HAP-1 (cell line): ENCODE measurements at regions of chr1 and their contacts with region 1.

Region 1: GRCh38 chr1:67861856-67862516 is 28.7 kb upstream of the GNG12 start:
- DNase-seq: no peak
- H3K4me3 ChIP-seq: no peak overlapping the region
- H3K4me1 ChIP-seq: no peaks in the 10 kb centered on the region
- H3K27me3 ChIP-seq: no peaks in the 10 kb centered on the region

Region 2: DNA sequence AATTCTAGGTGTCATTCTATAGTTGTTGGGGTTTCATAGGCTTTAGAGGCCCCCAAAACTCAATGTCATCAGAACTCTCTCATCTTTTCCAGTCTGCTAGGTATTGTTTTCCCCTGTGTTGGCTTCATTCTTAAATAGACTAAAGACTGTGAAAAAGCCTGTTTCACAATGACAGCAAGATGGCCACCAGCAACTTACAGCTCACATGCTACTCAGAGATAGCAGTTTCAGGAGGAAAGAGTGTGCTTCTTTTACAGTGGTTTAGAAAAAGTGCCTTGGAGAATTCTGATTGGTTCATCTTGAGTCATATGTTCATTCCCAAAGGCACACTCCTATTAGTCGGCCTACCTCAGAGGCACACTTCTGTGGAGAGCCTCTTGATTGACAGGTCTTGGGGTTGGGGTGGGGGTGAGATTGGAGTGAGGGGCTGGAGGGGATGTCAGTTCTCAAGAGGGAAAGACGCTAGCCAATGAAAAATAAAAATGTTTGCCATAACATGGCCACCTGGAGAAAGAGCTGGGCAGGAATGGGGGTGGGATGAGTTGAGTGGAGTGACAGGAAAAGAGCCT is 687.2 kb before region 1 on chr1:
- in situ Hi-C with region 1: no loop called
- DNase-seq: no peak
- H3K4me3 ChIP-seq: no peak overlapping the region
- H3K4me1 ChIP-seq: no peaks in the 10 kb centered on the region
- H3K27me3 ChIP-seq: no peaks in the 10 kb centered on the region

Region 3: GRCh38 chr1:68111519-68112436 is 249.8 kb after region 1 on chr1:
- in situ Hi-C with region 1: loop called (anchors 5 kb)
- DNase-seq: peak; percentile 52 to 57
- H3K4me3 ChIP-seq: no peak overlapping the region
- H3K4me1 ChIP-seq: no peaks in the 10 kb centered on the region
- H3K27me3 ChIP-seq: no peaks in the 10 kb centered on the region